Stomach (tissue), 19 donors: ENCODE measurements at regions of chr16 and their contacts with region 1.

Region 1: GRCh38 chr16:81730090-81731051 is 48.7 kb upstream of the PLCG2 start:
- DNase-seq: peak; percentile 89 to 96
- H3K4me3 ChIP-seq: peak overlapping the region; percentile 40 to 44 (median 42)
- H3K27ac ChIP-seq: peak overlapping the region; percentile 28 to 79 (median 76)
- H3K4me1 ChIP-seq: peaks cover 12 to 19% (median 16%) of the 10 kb centered on the region in 4 donors
- H3K27me3 ChIP-seq: no peaks in the 10 kb centered on the region
- CTCF ChIP-seq: peak in 5 of 7 experiments; percentile 38 to 68 (median 64)
- EP300 ChIP-seq: no peak
- POLR2A ChIP-seq: no peak

Region 2: DNA sequence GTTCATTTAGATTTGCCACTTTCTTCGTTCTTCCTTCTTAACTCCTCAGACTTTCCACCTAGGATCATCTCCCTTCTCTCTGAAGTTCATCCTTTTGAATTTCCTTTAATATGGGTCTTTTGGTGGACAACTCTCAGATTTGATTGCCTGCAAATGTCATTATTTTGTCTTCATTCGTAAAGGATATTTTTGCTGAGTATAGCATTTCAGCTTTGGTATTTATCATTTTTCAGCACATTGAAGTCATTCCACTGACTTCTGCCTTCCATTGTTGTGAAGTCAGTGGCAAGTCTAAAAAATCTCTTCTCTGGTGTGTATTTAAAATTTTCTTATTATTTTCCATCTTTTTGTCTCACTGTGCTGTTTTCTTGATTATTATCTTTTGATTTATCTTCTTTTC is 370.2 kb before region 1 on chr16:
- intact Hi-C with region 1: loop called (anchors 5 kb)
- DNase-seq: no peak
- H3K4me3 ChIP-seq: no peak overlapping the region
- H3K27ac ChIP-seq: no peak overlapping the region
- H3K4me1 ChIP-seq: peaks cover 0 to 6% (median 0%) of the 10 kb centered on the region in 4 donors
- H3K27me3 ChIP-seq: no peaks in the 10 kb centered on the region
- CTCF ChIP-seq: no peak
- EP300 ChIP-seq: no peak
- POLR2A ChIP-seq: no peak

Region 3: DNA sequence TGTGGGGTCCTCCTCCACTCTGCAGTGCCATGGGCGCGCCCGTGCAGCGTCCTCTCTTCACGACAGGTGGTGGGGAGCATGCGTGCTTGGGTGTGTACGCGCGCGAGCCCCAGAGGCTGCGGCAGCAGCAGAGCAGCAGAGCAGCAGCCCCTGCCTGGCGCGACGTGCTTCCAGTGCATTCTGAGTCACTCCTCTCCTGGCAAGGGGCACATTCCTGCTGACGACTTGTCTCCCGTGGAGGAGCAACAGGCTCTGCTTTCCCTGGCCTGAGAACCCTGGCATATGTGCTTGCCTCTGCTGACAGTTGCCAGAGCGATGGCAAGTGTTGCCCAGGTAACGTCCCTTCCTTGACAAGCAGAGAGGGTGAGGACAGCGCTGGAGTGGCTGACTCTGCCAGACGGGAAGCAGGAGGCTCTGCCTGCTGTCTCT is 85.1 kb before region 1 on chr16:
- intact Hi-C with region 1: no loop called
- DNase-seq: peak in 1 of 2 donors; percentile 89
- H3K4me3 ChIP-seq: no peak overlapping the region
- H3K27ac ChIP-seq: peak overlapping the region; percentile 35 to 84 (median 53)
- H3K4me1 ChIP-seq: peaks cover 0 to 38% (median 24%) of the 10 kb centered on the region in 4 donors
- H3K27me3 ChIP-seq: no peaks in the 10 kb centered on the region
- CTCF ChIP-seq: no peak
- EP300 ChIP-seq: no peak
- POLR2A ChIP-seq: no peak

Region 4: DNA sequence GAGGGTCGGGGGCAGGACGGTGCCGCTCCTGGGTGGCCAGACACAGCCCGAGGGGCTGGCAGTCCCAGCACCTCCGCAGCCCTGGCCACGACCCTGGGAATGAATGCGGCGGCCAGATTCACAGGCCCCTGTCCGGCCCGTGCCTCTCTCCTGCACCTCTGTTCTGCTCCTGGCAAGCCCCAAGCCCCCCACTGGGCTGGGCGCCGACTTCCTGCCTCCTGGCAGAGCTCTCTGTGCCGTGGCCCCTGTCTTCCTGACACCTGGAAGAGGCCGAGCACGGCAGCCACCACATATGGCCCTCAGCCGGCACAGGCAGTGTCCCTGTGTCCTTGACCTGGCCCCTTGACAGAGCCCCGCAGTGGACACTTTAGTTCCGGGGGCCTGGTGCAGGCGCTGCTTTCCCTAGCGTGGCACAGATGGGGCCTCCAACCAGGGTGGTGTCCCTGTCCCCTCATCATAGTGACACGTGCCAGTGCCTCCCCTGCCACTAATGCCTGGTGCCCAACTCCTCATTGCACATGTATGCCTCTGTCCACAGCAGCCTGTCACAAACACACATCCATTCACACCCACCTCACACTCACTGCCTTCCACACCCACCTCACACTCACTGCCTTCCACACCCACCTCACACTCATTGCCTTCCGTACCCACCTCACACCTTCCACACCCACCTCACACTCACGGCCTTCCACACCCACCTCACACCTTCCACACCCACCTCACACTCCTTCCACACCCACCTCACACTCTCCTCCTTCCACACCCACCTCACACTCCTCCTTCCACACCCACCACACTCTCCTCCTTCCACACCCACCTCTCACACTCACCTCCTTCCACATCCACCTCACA is 61.9 kb before region 1 on chr16:
- intact Hi-C with region 1: no loop called
- DNase-seq: no peak
- H3K4me3 ChIP-seq: no peak overlapping the region
- H3K27ac ChIP-seq: peak overlapping the region in 3 of 5 donors; percentile 38 to 66 (median 59)
- H3K4me1 ChIP-seq: peaks cover 0 to 26% (median 6%) of the 10 kb centered on the region in 4 donors
- H3K27me3 ChIP-seq: no peaks in the 10 kb centered on the region
- CTCF ChIP-seq: no peak
- EP300 ChIP-seq: no peak
- POLR2A ChIP-seq: no peak